Head of caudate nucleus (tissue), 42 donors: ENCODE measurements at regions of chr5 and their contacts with region 1.

Region 1: DNA sequence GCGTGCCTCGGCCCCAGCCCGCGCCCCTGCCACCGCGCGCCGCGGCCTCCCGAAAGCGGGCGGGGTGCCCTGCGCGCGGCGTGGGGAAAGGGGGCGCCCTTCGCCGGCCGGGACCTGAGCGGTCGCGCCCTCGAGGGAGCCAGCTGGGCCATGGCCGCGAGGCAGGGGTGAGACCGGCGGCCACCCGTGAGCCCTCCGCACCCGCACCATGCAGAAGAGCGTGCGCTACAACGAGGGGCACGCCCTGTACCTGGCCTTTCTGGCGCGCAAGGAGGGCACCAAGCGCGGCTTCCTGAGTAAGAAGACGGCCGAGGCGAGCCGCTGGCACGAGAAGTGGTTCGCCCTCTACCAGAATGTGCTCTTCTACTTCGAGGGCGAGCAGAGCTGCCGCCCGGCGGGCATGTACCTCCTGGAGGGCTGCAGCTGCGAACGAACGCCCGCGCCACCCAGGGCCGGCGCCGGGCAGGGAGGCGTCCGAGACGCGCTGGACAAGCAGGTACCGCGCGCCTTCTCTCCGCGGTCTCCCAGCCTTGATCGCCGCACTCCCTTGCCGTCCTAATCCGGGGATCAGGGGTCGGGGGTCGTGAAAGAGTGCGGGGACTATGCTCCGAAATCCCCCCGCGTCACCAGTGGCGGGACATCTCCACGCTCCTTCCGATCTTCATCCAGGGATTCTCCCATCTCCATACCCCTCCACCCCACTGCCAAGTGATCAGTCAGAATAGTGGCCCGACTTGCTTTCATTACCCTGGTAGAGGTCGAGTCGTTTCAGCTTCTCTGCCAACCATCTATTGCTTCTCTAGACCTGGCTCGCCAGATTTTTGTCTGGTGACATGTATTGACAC is 590 bp downstream of the RASGRF2 start:
- DNase-seq: peak in 40 of 42 donors; percentile 15 to 83 (median 61)

Region 2: DNA sequence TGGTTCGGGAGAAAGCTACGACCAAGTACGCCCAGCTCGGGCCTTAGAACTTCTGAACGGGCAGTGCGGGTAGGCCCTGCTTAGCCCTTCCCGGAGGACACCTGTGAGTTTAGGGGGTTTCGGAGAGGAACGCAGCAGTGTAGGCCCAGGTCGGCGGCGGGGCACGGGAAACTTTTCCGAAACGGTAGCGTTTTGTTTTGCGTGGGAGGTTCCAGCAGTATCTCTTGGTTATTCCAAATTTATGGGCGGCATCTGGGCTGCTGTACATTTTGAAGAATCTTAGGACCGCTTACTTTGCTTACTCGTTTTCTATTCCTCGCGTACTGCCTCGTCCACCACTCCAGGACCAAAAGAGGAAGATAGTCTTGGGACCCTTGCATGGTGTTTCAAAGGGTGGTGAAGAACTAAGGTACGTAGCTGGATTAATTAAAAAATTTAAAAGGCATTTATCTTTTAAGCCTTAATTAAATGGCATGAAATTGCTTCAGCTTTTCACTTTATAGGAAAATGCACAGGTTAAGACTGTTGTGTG is 1348.0 kb before region 1 on chr5:
- intact Hi-C with region 1: no loop called
- DNase-seq: peak in 1 of 42 donors; percentile 61

Region 3: DNA sequence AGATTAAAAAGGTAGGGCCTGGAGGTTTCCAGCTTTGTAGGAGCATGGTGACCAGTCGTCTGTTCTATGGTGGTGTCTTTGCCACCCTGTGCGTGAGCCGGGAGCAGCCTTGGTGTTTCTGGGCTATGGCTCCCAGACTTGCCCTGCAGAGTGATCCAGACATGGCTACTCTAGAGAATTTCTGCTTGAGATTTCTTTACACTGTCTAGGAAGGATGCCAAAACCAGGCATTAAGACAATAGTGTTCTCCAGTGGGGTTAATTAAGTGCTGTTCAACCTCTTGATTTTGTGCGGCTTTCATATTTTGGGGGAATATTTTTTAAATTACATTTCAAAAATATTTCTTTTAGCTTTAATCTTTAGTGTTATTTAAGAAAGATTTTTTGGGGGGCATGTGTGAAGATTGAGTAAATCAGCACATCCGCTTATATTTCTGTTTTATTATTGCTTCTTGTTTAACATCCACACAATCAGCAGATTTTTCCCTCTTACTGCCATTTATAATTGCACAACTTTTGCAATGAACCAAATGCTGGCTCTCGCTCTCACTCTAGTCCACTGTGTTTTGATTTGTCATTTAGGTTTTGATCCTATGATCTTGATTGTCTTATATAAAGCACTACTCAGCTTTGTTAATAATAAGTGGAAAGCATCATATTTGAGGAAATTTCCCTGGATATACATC is 110.0 kb after region 1 on chr5:
- intact Hi-C with region 1: loop called (anchors 10 kb)
- DNase-seq: no peak

Region 4: DNA sequence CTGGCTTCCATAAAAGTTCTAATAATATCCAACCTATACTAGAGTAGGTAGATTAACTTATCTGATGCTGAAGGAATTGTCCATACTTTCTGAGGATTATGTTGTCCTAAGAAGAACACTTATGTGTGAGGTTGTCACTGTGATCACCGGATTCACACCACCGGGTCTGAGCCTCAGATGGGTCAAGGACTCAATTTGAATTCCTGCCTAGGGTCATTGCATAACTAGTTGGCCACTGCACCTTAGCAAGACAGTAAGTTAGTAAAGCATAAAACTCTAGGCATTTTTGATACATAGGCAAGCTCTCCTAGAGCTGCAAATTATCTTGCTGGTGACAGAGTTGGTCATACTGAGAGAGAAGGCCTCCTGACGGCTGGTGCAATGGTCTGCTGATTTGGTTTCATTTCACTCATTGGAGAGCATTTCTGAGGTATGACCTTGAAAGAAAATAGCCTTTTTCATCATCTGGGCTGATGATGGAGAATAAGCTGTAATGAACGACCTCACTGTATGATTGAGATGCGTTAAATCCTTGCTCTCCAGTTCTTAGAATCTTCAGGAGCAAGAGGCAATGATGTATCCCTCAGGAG is 200.4 kb after region 1 on chr5:
- intact Hi-C with region 1: loop called (anchors 5 kb)
- DNase-seq: no peak